ENCODE measurements at regions of chr4 and their contacts with region 1.

Region 1: GRCh38 chr4:77862478-77863216 is at the start of gene MRPL1:
- DNase-seq: peak; percentile 77 to 96 (median 88)
- ATAC-seq: peak; percentile 76
- H3K4me3 ChIP-seq: peak within 1 kb of the TSS; percentile 63 to 76
- H3K4me3 Mint-ChIP-seq: peak within 1 kb of the TSS; percentile 94
- H3K27ac ChIP-seq: peak within 1 kb of the TSS; percentile 95 to 98
- H3K27ac Mint-ChIP-seq: peak within 1 kb of the TSS; percentile 99
- H3K4me1 ChIP-seq: peaks cover 26% of the 10 kb centered on the region
- H3K4me1 Mint-ChIP-seq: peaks cover 62% of the 10 kb centered on the region
- H3K27me3 ChIP-seq: no peaks in the 10 kb centered on the region
- H3K27me3 Mint-ChIP-seq: no peaks in the 10 kb centered on the region
- CTCF ChIP-seq: no peak
- total RNA-seq, gene MRPL1: 14.8 to 20.5 TPM

Region 2: GRCh38 chr4:75995727-75996126 is 1866.9 kb before region 1 on chr4:
- CTCF ChIA-PET with region 1: no interaction called
- POLR2A ChIA-PET with region 1: no interaction called
- intact Hi-C with region 1: loop called in 1 of 2 experiments (anchors 10 kb)
- DNase-seq: peak in 2 of 9 experiments; percentile 55 to 68
- ATAC-seq: no peak
- H3K4me3 ChIP-seq: no peak overlapping the region
- H3K4me3 Mint-ChIP-seq: no peak overlapping the region
- H3K27ac ChIP-seq: no peak overlapping the region
- H3K27ac Mint-ChIP-seq: no peak overlapping the region
- H3K4me1 ChIP-seq: peaks cover 6% of the 10 kb centered on the region
- H3K4me1 Mint-ChIP-seq: peaks cover 4% of the 10 kb centered on the region
- H3K27me3 ChIP-seq: no peaks in the 10 kb centered on the region
- H3K27me3 Mint-ChIP-seq: peaks cover 1% of the 10 kb centered on the region
- CTCF ChIP-seq: peak; percentile 77

Region 3: GRCh38 chr4:76772498-76773106 is 1090.0 kb before region 1 on chr4:
- CTCF ChIA-PET with region 1: no interaction called
- POLR2A ChIA-PET with region 1: no interaction called
- intact Hi-C with region 1: no loop called
- DNase-seq: no peak
- ATAC-seq: no peak
- H3K4me3 ChIP-seq: no peak overlapping the region
- H3K4me3 Mint-ChIP-seq: no peak overlapping the region
- H3K27ac ChIP-seq: no peak overlapping the region
- H3K27ac Mint-ChIP-seq: no peak overlapping the region
- H3K4me1 ChIP-seq: no peaks in the 10 kb centered on the region
- H3K4me1 Mint-ChIP-seq: no peaks in the 10 kb centered on the region
- H3K27me3 ChIP-seq: peaks cover 0 to 2% of the 10 kb centered on the region in 2 experiments
- H3K27me3 Mint-ChIP-seq: peaks cover 2% of the 10 kb centered on the region
- CTCF ChIP-seq: no peak

Region 4: GRCh38 chr4:77618383-77619122 is 244.1 kb before region 1 on chr4:
- CTCF ChIA-PET with region 1: interaction called, 3 read pairs
- POLR2A ChIA-PET with region 1: no interaction called
- intact Hi-C with region 1: loop called in 1 of 2 experiments (anchors 5 kb)
- DNase-seq: peak; percentile 10 to 72 (median 59)
- ATAC-seq: peak; percentile 69
- H3K4me3 ChIP-seq: no peak overlapping the region
- H3K4me3 Mint-ChIP-seq: no peak overlapping the region
- H3K27ac ChIP-seq: no peak overlapping the region
- H3K27ac Mint-ChIP-seq: no peak overlapping the region
- H3K4me1 ChIP-seq: no peaks in the 10 kb centered on the region
- H3K4me1 Mint-ChIP-seq: peaks cover 6% of the 10 kb centered on the region
- H3K27me3 ChIP-seq: peaks cover 0 to 2% of the 10 kb centered on the region in 2 experiments
- H3K27me3 Mint-ChIP-seq: peaks cover 4% of the 10 kb centered on the region
- CTCF ChIP-seq: peak; percentile 89

Region 5: DNA sequence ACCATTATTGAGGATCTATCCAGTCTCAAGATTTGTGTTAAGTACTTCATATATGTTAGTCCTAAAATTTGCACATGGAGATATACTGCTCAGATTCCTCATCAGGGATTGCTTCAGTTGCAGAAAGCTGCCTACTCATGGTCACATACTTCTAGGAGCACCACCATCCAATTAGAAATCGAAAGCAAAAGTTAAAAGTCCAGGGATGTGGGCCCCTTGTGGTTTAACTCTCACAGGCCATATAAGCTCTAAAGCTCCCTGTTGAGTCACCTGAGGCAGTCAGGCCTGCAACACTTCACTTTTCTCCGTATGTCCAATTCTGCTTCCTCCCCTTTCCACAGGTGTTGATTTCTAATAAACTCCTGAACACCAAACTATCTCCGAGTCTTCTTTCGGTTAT is 127.7 kb before region 1 on chr4:
- CTCF ChIA-PET with region 1: no interaction called
- POLR2A ChIA-PET with region 1: interaction called, 5 read pairs
- intact Hi-C with region 1: loop called (anchors 2 to 5 kb)
- DNase-seq: peak in 4 of 9 experiments; percentile 5 to 77 (median 42)
- ATAC-seq: peak; percentile 74
- H3K4me3 ChIP-seq: no peak overlapping the region
- H3K4me3 Mint-ChIP-seq: peak overlapping the region; percentile 77
- H3K27ac ChIP-seq: peak overlapping the region in 1 of 2 experiments; percentile 23
- H3K27ac Mint-ChIP-seq: peak overlapping the region; percentile 86
- H3K4me1 ChIP-seq: peaks cover 28% of the 10 kb centered on the region
- H3K4me1 Mint-ChIP-seq: peaks cover 74% of the 10 kb centered on the region
- H3K27me3 ChIP-seq: no peaks in the 10 kb centered on the region
- H3K27me3 Mint-ChIP-seq: no peaks in the 10 kb centered on the region
- CTCF ChIP-seq: no peak

Region 6: DNA sequence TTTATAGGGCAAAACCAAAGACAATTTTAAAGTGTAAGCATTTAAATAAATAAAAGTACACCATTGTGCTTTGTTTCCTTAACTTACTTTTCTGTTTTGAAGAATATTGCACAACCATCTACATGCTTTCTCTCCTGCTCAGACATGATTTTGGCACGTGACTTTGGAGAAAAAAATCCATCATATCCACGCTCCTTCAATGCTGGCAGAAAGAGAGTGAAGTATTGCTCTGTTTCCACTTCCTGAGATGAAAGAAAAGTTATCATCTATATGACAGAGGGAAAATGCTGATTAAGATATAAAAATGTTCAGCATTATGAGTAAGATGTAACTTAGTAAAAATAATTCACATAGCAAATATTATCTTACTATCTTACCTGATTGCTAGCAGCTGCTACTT is 120.6 kb before region 1 on chr4:
- CTCF ChIA-PET with region 1: no interaction called
- POLR2A ChIA-PET with region 1: interaction called, 5 read pairs
- intact Hi-C with region 1: loop called (anchors 5 kb)
- DNase-seq: no peak
- ATAC-seq: no peak
- H3K4me3 ChIP-seq: no peak overlapping the region
- H3K4me3 Mint-ChIP-seq: no peak overlapping the region
- H3K27ac ChIP-seq: no peak overlapping the region
- H3K27ac Mint-ChIP-seq: peak overlapping the region; percentile 27
- H3K4me1 ChIP-seq: peaks cover 10% of the 10 kb centered on the region
- H3K4me1 Mint-ChIP-seq: peaks cover 53% of the 10 kb centered on the region
- H3K27me3 ChIP-seq: no peaks in the 10 kb centered on the region
- H3K27me3 Mint-ChIP-seq: no peaks in the 10 kb centered on the region
- CTCF ChIP-seq: no peak

Region 7: DNA sequence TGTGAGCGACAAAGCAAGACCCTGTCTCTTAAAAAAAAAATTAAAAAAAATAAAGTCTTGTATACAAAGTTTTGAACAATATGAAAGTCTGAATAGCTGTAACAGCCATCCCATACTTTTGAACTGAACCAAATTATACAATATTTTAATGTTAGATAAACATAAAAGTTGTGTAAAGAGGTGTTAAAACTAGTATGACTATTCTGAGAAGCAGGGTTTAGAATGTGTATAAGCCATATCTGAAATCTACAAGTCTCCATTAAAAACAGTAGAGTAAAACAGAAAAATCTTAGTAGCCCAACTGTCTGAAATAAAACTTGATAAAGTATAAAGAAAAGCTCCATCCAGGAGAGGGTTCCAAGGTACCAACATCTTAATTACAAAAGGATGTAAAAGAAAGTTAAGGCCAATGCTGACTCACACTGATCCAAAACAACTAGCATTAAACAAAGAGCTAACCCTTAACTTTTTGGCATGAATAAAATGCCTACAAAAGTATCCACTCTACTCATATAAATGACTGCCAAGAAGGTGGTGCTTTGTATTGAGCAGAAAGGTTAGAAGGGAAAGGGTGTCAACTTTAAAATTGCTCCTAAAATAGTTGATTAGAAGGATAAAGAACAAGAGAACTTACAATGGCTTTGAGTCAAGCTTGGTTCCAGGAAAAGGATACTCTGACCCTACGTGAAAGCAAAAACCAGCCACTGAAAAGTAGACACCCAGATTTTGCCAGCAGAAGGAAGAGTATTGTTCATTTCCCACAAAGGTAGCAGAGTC is 62.0 kb before region 1 on chr4:
- CTCF ChIA-PET with region 1: interaction called, 4 read pairs
- POLR2A ChIA-PET with region 1: interaction called, 17 read pairs
- intact Hi-C with region 1: no loop called
- DNase-seq: no peak
- ATAC-seq: peak; percentile 10
- H3K4me3 ChIP-seq: peak overlapping the region; percentile 6 to 19
- H3K4me3 Mint-ChIP-seq: peak overlapping the region; percentile 72
- H3K27ac ChIP-seq: peak overlapping the region; percentile 2 to 71
- H3K27ac Mint-ChIP-seq: peak overlapping the region; percentile 78
- H3K4me1 ChIP-seq: peaks cover 73% of the 10 kb centered on the region
- H3K4me1 Mint-ChIP-seq: peaks cover 82% of the 10 kb centered on the region
- H3K27me3 ChIP-seq: no peaks in the 10 kb centered on the region
- H3K27me3 Mint-ChIP-seq: no peaks in the 10 kb centered on the region
- CTCF ChIP-seq: no peak

Region 8: DNA sequence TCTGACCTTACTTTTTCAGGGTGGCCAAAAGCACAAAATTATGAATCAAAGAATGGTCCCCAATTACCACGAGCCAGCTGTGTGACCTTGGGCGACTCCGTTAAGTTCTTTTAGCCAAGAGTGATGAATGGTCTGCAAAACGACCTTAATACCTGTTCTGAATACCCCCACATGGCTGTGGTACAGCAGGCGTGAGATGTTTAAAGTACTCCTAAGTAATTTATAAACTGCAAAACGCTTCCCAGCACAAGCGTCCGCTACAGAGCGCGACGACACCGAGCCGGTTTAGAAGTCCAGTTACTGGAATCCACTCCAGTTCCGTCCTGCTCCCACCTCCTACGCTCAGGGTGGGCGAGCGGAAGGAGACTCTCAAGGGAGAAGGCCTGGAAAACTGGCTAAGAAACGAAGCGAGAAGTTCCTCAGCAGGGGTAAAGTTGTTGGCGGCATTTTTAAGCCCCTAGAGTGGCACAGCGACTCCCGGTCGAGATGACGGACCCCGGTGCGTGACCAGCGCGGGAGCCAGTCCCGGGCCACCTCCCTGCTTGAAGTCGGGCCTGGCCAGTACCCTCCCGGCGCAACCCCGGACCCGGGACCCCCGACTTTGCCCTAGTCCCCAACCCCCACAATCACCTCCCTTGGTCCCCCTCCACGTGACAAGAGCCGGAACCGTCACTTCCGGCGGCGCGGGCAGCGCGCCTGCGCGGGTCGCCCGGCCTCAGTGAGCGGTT is 912.8 kb after region 1 on chr4:
- CTCF ChIA-PET with region 1: no interaction called
- POLR2A ChIA-PET with region 1: interaction called, 3 read pairs
- intact Hi-C with region 1: loop called (anchors 5 to 10 kb)
- DNase-seq: peak; percentile 75 to 93 (median 86)
- ATAC-seq: peak; percentile 57
- H3K4me3 ChIP-seq: peak overlapping the region; percentile 87
- H3K4me3 Mint-ChIP-seq: peak overlapping the region; percentile 92
- H3K27ac ChIP-seq: peak overlapping the region; percentile 82 to 87
- H3K27ac Mint-ChIP-seq: peak overlapping the region; percentile 94
- H3K4me1 ChIP-seq: peaks cover 17% of the 10 kb centered on the region
- H3K4me1 Mint-ChIP-seq: peaks cover 16% of the 10 kb centered on the region
- H3K27me3 ChIP-seq: no peaks in the 10 kb centered on the region
- H3K27me3 Mint-ChIP-seq: no peaks in the 10 kb centered on the region
- CTCF ChIP-seq: no peak

Region 9: GRCh38 chr4:78990938-78991810 is 1128.5 kb after region 1 on chr4:
- CTCF ChIA-PET with region 1: no interaction called
- POLR2A ChIA-PET with region 1: no interaction called
- intact Hi-C with region 1: no loop called
- DNase-seq: no peak
- ATAC-seq: no peak
- H3K4me3 ChIP-seq: no peak overlapping the region
- H3K4me3 Mint-ChIP-seq: no peak overlapping the region
- H3K27ac ChIP-seq: no peak overlapping the region
- H3K27ac Mint-ChIP-seq: no peak overlapping the region
- H3K4me1 ChIP-seq: no peaks in the 10 kb centered on the region
- H3K4me1 Mint-ChIP-seq: no peaks in the 10 kb centered on the region
- H3K27me3 ChIP-seq: peaks cover 0 to 4% of the 10 kb centered on the region in 2 experiments
- H3K27me3 Mint-ChIP-seq: no peaks in the 10 kb centered on the region
- CTCF ChIP-seq: no peak

Measured in CD8-positive, alpha-beta T cell (primary cell).